ENCODE measurements at regions of chr7 and their contacts with region 1.

Region 1: GRCh38 chr7:38215735-38216670 is 38.0 kb downstream of the STARD3NL start:
- DNase-seq: peak; percentile 77
- H3K4me3 ChIP-seq: no peak overlapping the region
- H3K27ac ChIP-seq: peak overlapping the region; percentile 6 to 31; a peak in 2 of 4 replicates
- H3K4me1 ChIP-seq: peaks cover 9 to 18% of the 10 kb centered on the region in 2 experiments; a peak in 3 of 4 replicates
- H3K27me3 ChIP-seq: no peaks in the 10 kb centered on the region
- CTCF ChIP-seq: peak; percentile 100
- EP300 ChIP-seq: no peak; a peak in 1 of 4 replicates
- RAD21 ChIP-seq: peak; percentile 86

Region 2: GRCh38 chr7:37901236-37901827 is 314.7 kb before region 1 on chr7:
- CTCF ChIA-PET with region 1: interaction called, 55 read pairs
- POLR2A ChIA-PET with region 1: no interaction called
- DNase-seq: peak; percentile 47
- H3K4me3 ChIP-seq: peak overlapping the region in 1 of 2 experiments; percentile 4; a peak in 1 of 4 replicates
- H3K27ac ChIP-seq: no peak overlapping the region
- H3K4me1 ChIP-seq: peaks cover 0 to 8% of the 10 kb centered on the region in 2 experiments; a peak in 3 of 4 replicates
- H3K27me3 ChIP-seq: no peaks in the 10 kb centered on the region
- CTCF ChIP-seq: peak; percentile 83
- EP300 ChIP-seq: no peak
- RAD21 ChIP-seq: peak; percentile 85

Region 3: GRCh38 chr7:37957221-37957980 is 258.6 kb before region 1 on chr7:
- CTCF ChIA-PET with region 1: no interaction called
- POLR2A ChIA-PET with region 1: no interaction called
- DNase-seq: no peak
- H3K4me3 ChIP-seq: no peak overlapping the region
- H3K27ac ChIP-seq: no peak overlapping the region
- H3K4me1 ChIP-seq: no peaks in the 10 kb centered on the region
- H3K27me3 ChIP-seq: no peaks in the 10 kb centered on the region
- CTCF ChIP-seq: no peak
- EP300 ChIP-seq: no peak
- RAD21 ChIP-seq: no peak

Region 4: GRCh38 chr7:38107486-38107893 is 108.5 kb before region 1 on chr7:
- CTCF ChIA-PET with region 1: interaction called, 174 read pairs
- POLR2A ChIA-PET with region 1: no interaction called
- DNase-seq: peak; percentile 57
- H3K4me3 ChIP-seq: no peak overlapping the region; a peak in 1 of 4 replicates
- H3K27ac ChIP-seq: no peak overlapping the region
- H3K4me1 ChIP-seq: no peaks in the 10 kb centered on the region; a peak in 1 of 4 replicates
- H3K27me3 ChIP-seq: no peaks in the 10 kb centered on the region
- CTCF ChIP-seq: peak; percentile 94
- EP300 ChIP-seq: no peak
- RAD21 ChIP-seq: peak; percentile 87

Region 5: DNA sequence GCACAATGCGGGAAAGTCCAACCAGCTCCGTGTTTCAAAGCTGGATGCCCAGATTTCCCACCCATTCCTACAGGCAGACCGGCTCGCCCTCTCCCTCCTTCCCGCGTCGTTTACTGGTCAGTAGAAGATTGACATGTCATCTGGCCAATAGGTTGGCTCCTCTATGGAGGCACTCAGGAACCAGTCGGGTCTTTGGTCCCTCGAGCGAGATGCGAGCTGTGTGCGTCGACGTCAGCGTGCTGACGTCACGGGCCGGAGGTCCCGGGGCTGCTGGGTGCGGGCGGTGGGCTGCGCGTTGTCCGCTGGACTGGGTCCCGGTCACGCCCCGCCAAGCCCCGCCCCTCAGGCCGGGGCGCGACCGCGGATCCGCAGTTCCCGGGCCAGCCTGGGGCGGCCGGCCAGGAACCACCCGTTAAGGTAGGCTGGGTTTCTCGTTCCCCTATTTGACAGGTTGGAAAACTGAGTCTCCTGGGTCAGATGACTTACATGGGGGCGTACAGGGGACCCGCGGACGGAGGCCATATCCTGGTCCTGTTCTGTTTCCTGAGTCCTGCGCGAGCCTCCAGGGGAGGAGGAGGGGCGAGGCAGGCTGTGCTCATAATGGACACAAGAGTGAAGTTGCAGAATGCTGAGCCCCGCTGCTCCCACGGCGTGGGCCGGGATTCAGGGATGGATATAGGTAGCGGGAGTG is 37.9 kb before region 1 on chr7 and contains the start of gene STARD3NL:
- CTCF ChIA-PET with region 1: interaction called, 31 read pairs
- POLR2A ChIA-PET with region 1: interaction called, 6 read pairs
- DNase-seq: peak; percentile 99
- H3K4me3 ChIP-seq: peak within 1 kb of the TSS; percentile 91 to 93
- H3K27ac ChIP-seq: peak within 1 kb of the TSS; percentile 78 to 98
- H3K4me1 ChIP-seq: peaks cover 8 to 21% of the 10 kb centered on the region in 2 experiments; a peak in 2 of 4 replicates
- H3K27me3 ChIP-seq: no peaks in the 10 kb centered on the region
- CTCF ChIP-seq: no peak; the same call in 1 of the 2 replicates
- EP300 ChIP-seq: 0 out of 4 replicates have a peak, but pooled peaks of 1 of the 2 experiments have one; percentile 15
- RAD21 ChIP-seq: no peak
- polyA plus RNA-seq, gene STARD3NL: 46.3 and 63.1 TPM in 2 replicates

Region 6: DNA sequence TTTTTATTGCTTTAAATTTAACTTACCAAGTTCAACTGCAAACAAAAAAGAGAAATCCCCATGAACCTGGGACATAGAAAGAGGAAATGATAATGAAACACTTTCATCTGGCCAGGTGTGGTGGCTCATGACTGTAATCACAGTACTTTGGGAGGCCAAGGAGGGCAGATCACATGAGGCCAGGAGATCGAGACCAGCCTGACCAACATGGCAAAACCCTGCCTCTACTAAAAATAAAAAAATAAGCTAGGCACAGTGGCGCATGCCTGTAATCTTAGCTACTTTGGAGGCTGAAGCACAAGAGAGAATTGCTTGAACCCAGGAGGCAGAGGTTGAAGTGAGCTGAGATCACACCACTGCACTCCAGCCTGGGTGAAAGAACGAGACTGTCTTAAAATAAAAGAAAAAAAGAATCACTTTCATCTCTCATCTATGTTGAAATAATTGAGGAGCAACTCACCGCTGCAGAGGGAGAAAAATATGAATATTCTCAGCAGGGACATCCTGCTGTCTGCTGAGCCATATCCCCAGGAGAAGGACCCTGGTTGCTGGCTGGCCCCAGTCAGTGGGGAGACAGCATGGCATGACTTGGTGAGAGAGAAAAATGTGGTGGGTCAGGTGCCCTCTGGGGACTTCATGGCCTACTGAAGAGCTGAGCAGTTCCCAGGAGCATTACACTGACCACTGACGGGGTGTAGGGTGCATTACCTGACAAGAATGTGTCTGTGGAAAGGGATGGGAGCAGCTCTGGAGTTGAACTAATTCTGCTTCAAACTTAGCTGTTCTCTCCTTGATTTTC is 80.3 kb after region 1 on chr7:
- CTCF ChIA-PET with region 1: interaction called, 10 read pairs
- POLR2A ChIA-PET with region 1: no interaction called
- DNase-seq: no peak
- H3K4me3 ChIP-seq: no peak overlapping the region
- H3K27ac ChIP-seq: no peak overlapping the region
- H3K4me1 ChIP-seq: no peaks in the 10 kb centered on the region
- H3K27me3 ChIP-seq: peaks cover 6% of the 10 kb centered on the region; the same call in 1 of the 2 replicates
- CTCF ChIP-seq: no peak
- EP300 ChIP-seq: no peak
- RAD21 ChIP-seq: no peak

Region 7: DNA sequence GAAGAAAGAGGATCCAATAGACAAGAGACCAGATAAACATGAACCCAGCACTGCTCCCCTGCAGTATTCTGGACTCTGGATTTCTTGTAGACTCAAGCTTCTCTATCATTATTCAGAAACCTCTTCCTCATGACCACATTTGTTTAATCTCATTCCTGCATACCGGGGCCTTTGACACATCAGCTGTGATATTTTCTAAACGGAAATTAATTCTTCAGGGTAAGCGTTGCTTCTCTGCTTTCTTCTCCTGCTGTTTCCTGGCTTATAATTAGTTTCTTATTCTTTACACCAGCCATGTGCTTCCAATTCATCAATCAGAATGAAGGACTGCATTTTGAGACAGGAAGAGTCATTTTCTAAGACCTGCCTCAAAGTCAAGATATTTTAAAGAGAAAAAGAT is 111.6 kb after region 1 on chr7:
- CTCF ChIA-PET with region 1: interaction called, 33 read pairs
- POLR2A ChIA-PET with region 1: no interaction called
- DNase-seq: no peak
- H3K4me3 ChIP-seq: no peak overlapping the region
- H3K27ac ChIP-seq: no peak overlapping the region
- H3K4me1 ChIP-seq: no peaks in the 10 kb centered on the region
- H3K27me3 ChIP-seq: peaks cover 11% of the 10 kb centered on the region; the same call in 1 of the 2 replicates
- CTCF ChIP-seq: no peak
- EP300 ChIP-seq: no peak
- RAD21 ChIP-seq: no peak